Gastrocnemius medialis (tissue), 4 donors: ENCODE measurements at regions of chr14 and their contacts with region 1.

Region 1: GRCh38 chr14:92793709-92794546 is at the start of gene GOLGA5:
- DNase-seq: peak; percentile 95 to 97
- ATAC-seq: peak; percentile 94 to 95
- H3K4me3 ChIP-seq: peak within 1 kb of the TSS; percentile 76 to 95 (median 92)
- H3K27ac ChIP-seq: peak within 1 kb of the TSS; percentile 87 to 92 (median 90)
- H3K4me1 ChIP-seq: peaks cover 15 to 26% of the 10 kb centered on the region in 2 donors
- H3K27me3 ChIP-seq: no peaks in the 10 kb centered on the region
- CTCF ChIP-seq: peak in 4 of 5 experiments; percentile 23 to 33 (median 30)
- POLR2A ChIP-seq: peak; percentile 73 to 83
- total RNA-seq, gene GOLGA5: 27.0 to 34.8 (median 33.8) TPM

Region 2: DNA sequence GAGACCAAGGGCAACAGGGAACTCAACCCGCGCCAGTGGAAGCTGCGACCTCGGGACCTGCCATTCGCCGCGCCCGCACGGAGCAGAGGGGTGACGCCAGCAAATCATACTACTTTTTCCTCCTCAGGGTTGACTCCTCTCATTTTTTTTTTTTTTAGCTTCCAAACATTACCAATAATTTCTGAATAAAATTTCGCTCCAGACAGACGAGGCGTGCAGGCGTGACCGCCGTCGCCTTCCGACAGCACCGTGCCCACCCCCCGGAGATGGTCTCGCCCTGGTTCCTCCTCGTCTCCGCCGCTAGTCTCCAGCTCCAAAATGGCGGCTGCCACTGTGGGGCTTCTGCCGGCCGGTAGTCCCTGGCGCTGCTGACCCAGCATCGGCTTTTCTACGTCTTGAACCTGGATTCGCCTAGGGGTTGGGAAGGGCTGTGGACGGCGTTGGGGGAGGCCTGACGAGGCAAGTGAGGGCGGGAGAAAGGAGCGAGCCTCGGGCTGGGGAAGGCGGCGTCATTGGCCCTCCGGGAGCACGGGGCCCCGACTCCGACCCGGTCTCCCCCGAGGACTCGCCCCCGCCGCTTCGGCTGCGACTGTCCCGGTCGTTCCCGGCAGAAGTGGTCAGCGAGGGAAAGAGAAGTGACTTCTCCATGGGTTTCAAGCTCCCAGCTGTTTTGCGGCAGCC is 672.1 kb before region 1 on chr14 and contains the starts of genes CPSF2 and NDUFB1:
- in situ Hi-C with region 1: loop called in 1 of 4 experiments (anchors 25 kb)
- intact Hi-C with region 1: loop called (anchors 10 kb)
- DNase-seq: peak; percentile 76 to 80
- ATAC-seq: peak; percentile 91 to 93
- H3K4me3 ChIP-seq: peak within 1 kb of the TSS; percentile 84 to 95 (median 91)
- H3K27ac ChIP-seq: peak within 1 kb of the TSS; percentile 92 to 99 (median 96)
- H3K4me1 ChIP-seq: peaks cover 37 to 41% of the 10 kb centered on the region in 2 donors
- H3K27me3 ChIP-seq: no peaks in the 10 kb centered on the region
- CTCF ChIP-seq: peak in 3 of 5 experiments; percentile 25 to 46 (median 39)
- POLR2A ChIP-seq: peak; percentile 59 to 67
- total RNA-seq, gene CPSF2: 52.2 to 146 (median 58.6) TPM
- total RNA-seq, gene NDUFB1: 409 to 1,081 (median 454) TPM